ENCODE measurements at regions of chr17 and their contacts with region 1.

Region 1: DNA sequence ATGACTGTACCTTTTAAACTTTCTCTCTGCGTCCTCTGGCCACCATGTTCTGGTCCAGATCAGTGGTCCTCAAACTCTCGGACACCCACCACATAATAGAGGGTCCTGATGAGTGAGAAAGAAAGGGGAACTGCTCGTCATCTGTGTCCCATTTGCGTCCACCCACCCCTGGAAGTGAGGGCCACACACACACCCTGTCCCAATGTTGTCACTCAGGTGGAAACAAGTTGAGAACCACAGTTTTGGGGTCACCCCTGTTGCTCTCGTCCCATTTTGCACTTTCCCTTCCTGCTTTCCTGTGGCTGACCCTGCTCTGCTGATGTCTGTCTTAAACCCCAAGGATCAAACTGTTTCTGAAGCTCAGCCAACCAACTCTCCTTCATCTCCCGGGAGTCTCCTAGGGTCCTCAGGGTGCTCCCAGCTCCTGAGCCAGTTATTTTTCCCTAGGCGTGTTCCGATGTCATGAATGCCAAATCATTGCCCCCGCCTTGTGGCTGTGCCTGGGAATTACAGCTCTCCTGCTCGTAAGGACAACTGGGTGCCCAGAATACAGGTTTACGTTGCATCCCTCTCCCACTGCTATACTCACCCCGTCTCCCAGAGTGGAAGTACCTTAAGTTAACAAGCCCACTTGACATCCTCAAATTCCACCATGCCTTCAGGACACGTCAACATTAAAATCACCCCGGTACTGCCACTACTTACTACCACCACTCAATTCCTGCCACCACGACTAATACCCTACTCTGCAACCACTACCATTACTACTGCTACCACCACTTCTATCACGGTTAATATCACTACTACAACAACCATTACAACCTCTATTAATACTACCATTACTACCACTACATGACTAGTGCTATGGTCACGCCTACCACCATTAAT is 26.0 kb upstream of the HNF1B start:
- DNase-seq: peak; percentile 66
- ATAC-seq: no peak
- H3K4me3 Mint-ChIP-seq: no peak overlapping the region
- H3K27ac Mint-ChIP-seq: peak overlapping the region; percentile 35
- H3K4me1 Mint-ChIP-seq: peaks cover 33% of the 10 kb centered on the region
- H3K27me3 Mint-ChIP-seq: peaks cover 32% of the 10 kb centered on the region
- CTCF ChIP-seq: peak; percentile 69

Region 2: DNA sequence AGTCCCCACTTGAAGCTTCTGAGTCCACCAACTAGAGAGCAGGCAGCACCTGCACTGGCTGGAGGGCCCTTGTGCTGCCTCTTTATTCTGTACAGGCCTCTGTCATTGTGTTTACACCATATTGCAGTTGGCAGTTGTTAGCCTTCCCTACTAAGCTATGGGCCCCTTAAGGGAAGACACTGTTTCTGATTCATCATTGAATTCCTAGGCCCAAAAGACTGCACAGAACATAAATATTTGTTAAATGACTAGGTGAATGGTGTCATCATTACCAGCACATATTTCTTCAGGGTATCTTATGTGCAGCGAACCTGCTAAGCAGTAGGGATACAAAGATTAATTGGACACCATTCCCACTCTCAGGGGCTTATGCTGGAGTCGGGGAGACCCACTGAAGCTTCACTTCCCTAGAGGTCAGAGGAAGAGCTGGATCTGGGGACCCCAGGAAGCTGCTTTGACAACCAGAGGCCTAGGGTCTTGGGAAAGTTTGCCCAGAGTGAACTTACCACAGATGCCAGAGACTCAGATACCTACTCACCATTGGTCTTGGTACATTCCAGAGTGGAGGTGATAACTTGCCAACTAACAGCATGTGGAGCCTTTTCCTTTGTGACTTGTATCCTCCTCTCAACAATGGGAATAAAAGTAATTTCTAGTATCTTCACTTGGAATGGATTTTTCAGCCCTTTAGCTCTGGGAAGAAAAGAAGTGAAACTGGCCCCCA is 98.9 kb before region 1 on chr17:
- CTCF ChIA-PET with region 1: no interaction called
- POLR2A ChIA-PET with region 1: no interaction called
- intact Hi-C with region 1: no loop called
- DNase-seq: no peak
- ATAC-seq: no peak
- H3K4me3 Mint-ChIP-seq: no peak overlapping the region
- H3K27ac Mint-ChIP-seq: no peak overlapping the region
- H3K4me1 Mint-ChIP-seq: no peaks in the 10 kb centered on the region
- H3K27me3 Mint-ChIP-seq: peaks cover 9% of the 10 kb centered on the region
- CTCF ChIP-seq: no peak

Region 3: GRCh38 chr17:37701496-37701898 is 69.4 kb before region 1 on chr17:
- CTCF ChIA-PET with region 1: interaction called, 10 read pairs
- POLR2A ChIA-PET with region 1: no interaction called
- intact Hi-C with region 1: no loop called
- DNase-seq: peak; percentile 74
- ATAC-seq: peak; percentile 51
- H3K4me3 Mint-ChIP-seq: no peak overlapping the region
- H3K27ac Mint-ChIP-seq: no peak overlapping the region
- H3K4me1 Mint-ChIP-seq: peaks cover 36% of the 10 kb centered on the region
- H3K27me3 Mint-ChIP-seq: peaks cover 13% of the 10 kb centered on the region
- CTCF ChIP-seq: peak; percentile 78

Region 4: GRCh38 chr17:37710344-37710886 is 60.5 kb before region 1 on chr17:
- CTCF ChIA-PET with region 1: no interaction called
- POLR2A ChIA-PET with region 1: no interaction called
- intact Hi-C with region 1: loop called (anchors 5 kb)
- DNase-seq: peak; percentile 14
- ATAC-seq: no peak
- H3K4me3 Mint-ChIP-seq: no peak overlapping the region
- H3K27ac Mint-ChIP-seq: no peak overlapping the region
- H3K4me1 Mint-ChIP-seq: peaks cover 2% of the 10 kb centered on the region
- H3K27me3 Mint-ChIP-seq: peaks cover 19% of the 10 kb centered on the region
- CTCF ChIP-seq: no peak